ENCODE measurements at regions of chr4 and their contacts with region 1.

Region 1: GRCh38 chr4:26319467-26319948 is 1.3 kb upstream of the RBPJ start:
- DNase-seq: peak; percentile 88 to 96 (median 94)
- ATAC-seq: peak; percentile 77
- H3K4me3 ChIP-seq: peak overlapping the region; percentile 89
- H3K4me3 Mint-ChIP-seq: peak overlapping the region; percentile 89 to 100 (median 96)
- H3K27ac ChIP-seq: peak overlapping the region; percentile 84
- H3K27ac Mint-ChIP-seq: peak overlapping the region; percentile 92 to 100 (median 96)
- H3K4me1 ChIP-seq: peaks cover 10 to 14% of the 10 kb centered on the region in 2 donors
- H3K4me1 Mint-ChIP-seq: peaks cover 34 to 43% (median 36%) of the 10 kb centered on the region in 7 donors
- H3K27me3 ChIP-seq: no peaks in the 10 kb centered on the region
- H3K27me3 Mint-ChIP-seq: no peaks in the 10 kb centered on the region

Region 2: DNA sequence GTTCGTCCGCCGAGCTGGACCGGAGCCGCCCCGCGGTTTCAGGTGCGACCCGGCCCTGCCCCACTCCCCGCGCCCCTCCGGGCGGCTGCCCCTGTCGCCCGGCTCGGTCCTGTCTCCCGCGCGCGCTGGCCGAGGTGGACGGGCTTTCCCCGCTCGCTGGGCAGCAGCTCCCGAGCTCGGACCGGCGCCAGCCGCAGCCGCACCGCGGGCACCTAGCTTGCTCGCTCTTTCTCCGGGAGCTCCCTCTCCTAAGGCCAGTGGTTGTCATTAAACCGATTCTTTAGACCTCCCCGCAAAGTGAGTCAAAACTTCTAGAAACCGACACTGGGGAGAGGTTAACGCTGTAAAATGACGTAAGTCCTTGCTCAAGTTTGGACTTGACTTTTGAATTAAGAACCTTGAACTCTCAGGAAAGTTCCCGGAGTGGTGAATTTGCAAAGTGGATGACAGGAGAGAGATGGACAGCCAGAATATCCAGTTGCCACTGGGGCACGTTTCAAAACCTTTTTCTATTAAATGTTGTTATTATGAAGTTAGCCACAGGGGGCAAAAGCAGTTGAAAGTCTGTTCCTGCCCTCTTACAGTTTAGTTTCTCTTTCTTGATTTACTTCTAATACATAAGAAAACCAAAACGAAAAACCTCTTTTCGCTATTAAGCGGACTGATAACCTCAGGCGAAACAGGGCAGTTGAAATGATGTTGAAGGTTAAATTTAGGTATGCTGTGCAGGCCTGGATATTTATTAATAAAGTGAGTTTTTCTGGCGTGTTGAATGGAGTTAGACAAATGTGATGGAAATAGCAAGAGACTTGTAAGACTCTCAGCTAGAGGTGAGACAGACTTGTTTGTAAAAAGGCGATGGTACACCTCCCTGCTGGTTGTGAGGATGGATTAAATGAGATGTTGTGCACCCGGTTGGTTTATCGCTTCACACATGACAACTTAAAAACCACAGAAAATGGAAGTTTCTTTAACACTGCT is 1084.8 kb before region 1 on chr4:
- CTCF ChIA-PET with region 1: no interaction called
- POLR2A ChIA-PET with region 1: no interaction called
- intact Hi-C with region 1: loop called in 1 of 2 experiments (anchors 5 kb)
- DNase-seq: peak; percentile 20 to 76 (median 64)
- ATAC-seq: peak; percentile 70
- H3K4me3 ChIP-seq: peak overlapping the region; percentile 80
- H3K4me3 Mint-ChIP-seq: peak overlapping the region; percentile 86 to 99 (median 94)
- H3K27ac ChIP-seq: peak overlapping the region; percentile 89
- H3K27ac Mint-ChIP-seq: peak overlapping the region; percentile 89 to 98 (median 95)
- H3K4me1 ChIP-seq: peaks cover 16 to 29% of the 10 kb centered on the region in 2 donors
- H3K4me1 Mint-ChIP-seq: peaks cover 16 to 57% (median 44%) of the 10 kb centered on the region in 7 donors
- H3K27me3 ChIP-seq: no peaks in the 10 kb centered on the region
- H3K27me3 Mint-ChIP-seq: no peaks in the 10 kb centered on the region

Region 3: DNA sequence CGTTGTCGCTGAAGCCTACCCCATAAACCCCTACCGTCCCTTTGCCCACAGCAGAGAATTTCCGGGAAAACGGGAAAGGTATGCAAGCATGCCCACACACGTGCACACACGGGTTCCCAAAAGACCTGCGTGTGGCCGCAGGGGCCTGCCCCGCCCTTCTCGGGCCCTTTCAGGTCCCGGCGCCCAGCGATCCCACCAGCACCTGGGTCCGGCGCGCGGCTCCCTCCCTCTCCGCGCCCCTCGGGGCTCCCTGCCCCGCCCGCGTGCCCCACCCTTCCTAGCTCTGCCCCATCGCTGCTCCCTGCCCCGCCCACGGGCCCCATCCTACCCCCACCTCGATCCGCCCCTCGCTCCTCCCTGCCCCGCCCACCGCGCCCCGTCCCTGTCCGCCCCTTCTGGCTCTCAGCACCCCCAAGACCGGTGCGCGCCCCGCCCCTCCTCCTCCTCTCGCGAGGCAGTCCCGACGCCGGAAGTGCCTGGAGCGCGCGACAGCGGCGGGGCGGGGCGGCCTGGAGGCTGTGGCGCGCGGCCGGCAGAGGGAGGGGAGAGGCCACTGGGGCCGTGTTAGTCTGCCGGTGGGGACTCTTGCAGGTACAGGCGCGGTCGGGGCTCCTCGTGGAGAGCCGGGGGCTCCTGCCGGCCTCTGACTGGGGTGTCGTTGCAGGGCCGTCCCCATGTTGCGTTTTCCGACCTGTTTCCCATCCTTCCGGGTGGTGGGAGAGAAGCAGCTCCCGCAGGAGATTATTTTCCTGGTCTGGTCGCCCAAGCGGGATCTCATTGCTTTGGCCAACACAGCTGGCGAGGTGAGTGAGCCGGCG is 942.5 kb before region 1 on chr4 and contains the start of gene ANAPC4:
- CTCF ChIA-PET with region 1: no interaction called
- POLR2A ChIA-PET with region 1: interaction called, 3 read pairs
- intact Hi-C with region 1: loop called in 1 of 2 experiments (anchors 2 kb)
- DNase-seq: peak; percentile 85 to 97 (median 92)
- ATAC-seq: peak; percentile 97
- H3K4me3 ChIP-seq: peak within 1 kb of the TSS; percentile 96
- H3K4me3 Mint-ChIP-seq: peak within 1 kb of the TSS in 2 of 10 donors; percentile 78 to 83
- H3K27ac ChIP-seq: peak within 1 kb of the TSS; percentile 76
- H3K27ac Mint-ChIP-seq: peak within 1 kb of the TSS in 7 of 9 donors; percentile 64 to 93 (median 83)
- H3K4me1 ChIP-seq: peaks cover 11 to 17% of the 10 kb centered on the region in 2 donors
- H3K4me1 Mint-ChIP-seq: peaks cover 0 to 18% (median 13%) of the 10 kb centered on the region in 7 donors
- H3K27me3 ChIP-seq: no peaks in the 10 kb centered on the region
- H3K27me3 Mint-ChIP-seq: no peaks in the 10 kb centered on the region
- total RNA-seq, gene ANAPC4: 40.6 to 55.3 (median 50.4) TPM

Region 4: GRCh38 chr4:25993395-25994185 is 325.9 kb before region 1 on chr4:
- CTCF ChIA-PET with region 1: no interaction called
- POLR2A ChIA-PET with region 1: no interaction called
- intact Hi-C with region 1: loop called in 1 of 2 experiments (anchors 1 kb)
- DNase-seq: peak in 1 of 9 donors; percentile 8
- ATAC-seq: peak; percentile 41
- H3K4me3 ChIP-seq: no peak overlapping the region
- H3K4me3 Mint-ChIP-seq: no peak overlapping the region
- H3K27ac ChIP-seq: no peak overlapping the region
- H3K27ac Mint-ChIP-seq: peak overlapping the region in 2 of 9 donors; percentile 48 to 62
- H3K4me1 ChIP-seq: no peaks in the 10 kb centered on the region
- H3K4me1 Mint-ChIP-seq: peaks cover 0 to 11% (median 0%) of the 10 kb centered on the region in 7 donors
- H3K27me3 ChIP-seq: no peaks in the 10 kb centered on the region
- H3K27me3 Mint-ChIP-seq: no peaks in the 10 kb centered on the region

Region 5: DNA sequence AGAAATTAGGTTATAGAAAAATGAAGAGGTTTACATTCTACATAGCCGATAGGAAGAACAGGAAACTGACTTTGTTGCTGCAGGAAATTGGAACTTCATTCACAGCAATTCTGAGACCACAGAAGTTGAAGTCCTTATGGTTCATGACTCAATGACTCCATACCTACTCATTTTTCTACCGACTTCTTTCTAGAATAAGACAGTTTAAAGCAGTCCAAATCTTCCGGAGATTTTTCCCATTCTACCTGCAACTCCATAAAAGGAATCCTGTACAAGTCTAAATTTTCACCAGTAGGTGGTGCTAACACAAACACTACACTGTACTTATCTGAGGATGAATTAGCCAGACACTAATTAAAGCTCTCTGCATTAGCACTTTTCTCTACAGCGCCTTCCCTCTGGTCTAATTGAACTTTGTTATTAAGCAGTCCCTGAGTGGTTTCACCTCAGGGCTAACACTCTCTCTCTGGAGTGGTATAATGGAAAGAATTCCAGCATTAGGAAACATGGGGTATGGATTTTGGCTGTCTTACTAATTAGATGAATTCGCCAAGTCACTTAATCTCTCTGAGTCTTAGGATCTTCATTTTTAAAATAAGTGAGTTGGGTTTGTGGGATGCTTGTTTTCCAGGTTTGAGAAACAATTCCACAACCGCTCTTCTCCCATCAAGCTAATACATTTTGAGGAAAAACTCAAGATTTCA is 237.6 kb before region 1 on chr4:
- CTCF ChIA-PET with region 1: interaction called, 6 read pairs
- POLR2A ChIA-PET with region 1: interaction called, 4 read pairs
- intact Hi-C with region 1: loop called (anchors 1 kb)
- DNase-seq: peak in 5 of 9 donors; percentile 16 to 29 (median 22)
- ATAC-seq: peak; percentile 66
- H3K4me3 ChIP-seq: no peak overlapping the region
- H3K4me3 Mint-ChIP-seq: peak overlapping the region in 1 of 10 donors; percentile 49
- H3K27ac ChIP-seq: no peak overlapping the region
- H3K27ac Mint-ChIP-seq: peak overlapping the region in 1 of 9 donors; percentile 73
- H3K4me1 ChIP-seq: no peaks in the 10 kb centered on the region
- H3K4me1 Mint-ChIP-seq: peaks cover 0 to 65% (median 6%) of the 10 kb centered on the region in 7 donors
- H3K27me3 ChIP-seq: no peaks in the 10 kb centered on the region
- H3K27me3 Mint-ChIP-seq: peaks cover 0 to 38% (median 7%) of the 10 kb centered on the region in 5 donors

Region 6: DNA sequence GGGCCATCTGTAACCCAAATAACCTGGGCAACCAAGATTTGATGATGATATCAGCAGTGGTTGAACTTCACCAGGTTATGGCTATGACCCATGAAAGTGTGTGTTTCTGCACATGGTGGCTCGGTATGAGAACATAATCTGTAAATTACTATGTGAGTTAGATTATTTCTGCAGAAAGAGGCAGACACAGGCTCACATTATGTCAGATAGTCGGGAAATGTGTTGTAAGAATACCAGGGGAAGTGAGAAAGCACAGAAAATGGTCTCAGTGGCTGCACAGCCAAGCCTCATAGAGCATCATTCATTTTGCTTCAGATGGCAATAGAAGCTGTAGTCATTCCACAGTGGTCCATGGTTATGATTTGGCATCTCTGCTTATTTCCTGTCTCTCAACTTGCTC is 61.7 kb before region 1 on chr4:
- CTCF ChIA-PET with region 1: no interaction called
- POLR2A ChIA-PET with region 1: no interaction called
- intact Hi-C with region 1: loop called in 1 of 2 experiments (anchors 5 kb)
- DNase-seq: no peak
- ATAC-seq: peak; percentile 50
- H3K4me3 ChIP-seq: no peak overlapping the region
- H3K4me3 Mint-ChIP-seq: no peak overlapping the region
- H3K27ac ChIP-seq: no peak overlapping the region
- H3K27ac Mint-ChIP-seq: no peak overlapping the region
- H3K4me1 ChIP-seq: no peaks in the 10 kb centered on the region
- H3K4me1 Mint-ChIP-seq: peaks cover 0 to 2% (median 0%) of the 10 kb centered on the region in 7 donors
- H3K27me3 ChIP-seq: no peaks in the 10 kb centered on the region
- H3K27me3 Mint-ChIP-seq: peaks cover 0 to 11% (median 0%) of the 10 kb centered on the region in 5 donors

Region 7: DNA sequence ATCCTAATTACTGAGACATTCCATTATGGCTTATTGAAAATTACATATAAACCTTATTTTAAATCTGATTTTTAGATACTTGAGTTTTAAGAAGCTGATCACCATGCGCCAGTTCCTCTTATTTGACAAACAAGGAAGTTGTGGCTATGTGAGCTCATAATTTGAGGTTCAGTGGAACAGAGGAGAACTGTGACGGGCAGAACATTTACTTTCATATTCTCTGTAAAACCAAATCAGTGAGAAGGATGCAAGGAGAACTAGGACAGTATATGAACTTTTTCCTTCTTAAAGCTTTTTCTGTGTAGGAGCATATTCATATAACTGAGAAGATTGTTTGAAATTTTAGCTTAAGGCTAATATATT is 566.4 kb after region 1 on chr4:
- CTCF ChIA-PET with region 1: no interaction called
- POLR2A ChIA-PET with region 1: interaction called, 3 read pairs
- intact Hi-C with region 1: loop called in 1 of 2 experiments (anchors 1 kb)
- DNase-seq: peak in 7 of 9 donors; percentile 60 to 81 (median 77)
- ATAC-seq: peak; percentile 76
- H3K4me3 ChIP-seq: peak overlapping the region; percentile 45
- H3K4me3 Mint-ChIP-seq: peak overlapping the region; percentile 70 to 91 (median 82)
- H3K27ac ChIP-seq: peak overlapping the region; percentile 73
- H3K27ac Mint-ChIP-seq: peak overlapping the region; percentile 93 to 98 (median 95)
- H3K4me1 ChIP-seq: peaks cover 32 to 39% of the 10 kb centered on the region in 2 donors
- H3K4me1 Mint-ChIP-seq: peaks cover 33 to 95% (median 84%) of the 10 kb centered on the region in 7 donors
- H3K27me3 ChIP-seq: no peaks in the 10 kb centered on the region
- H3K27me3 Mint-ChIP-seq: no peaks in the 10 kb centered on the region

Region 8: GRCh38 chr4:26985873-26986272 is 666.4 kb after region 1 on chr4:
- CTCF ChIA-PET with region 1: no interaction called
- POLR2A ChIA-PET with region 1: no interaction called
- intact Hi-C with region 1: no loop called
- DNase-seq: peak in 8 of 9 donors; percentile 33 to 71 (median 59)
- ATAC-seq: peak; percentile 95
- H3K4me3 ChIP-seq: peak overlapping the region; percentile 11
- H3K4me3 Mint-ChIP-seq: peak overlapping the region in 9 of 10 donors; percentile 19 to 72 (median 63)
- H3K27ac ChIP-seq: no peak overlapping the region
- H3K27ac Mint-ChIP-seq: peak overlapping the region in 6 of 9 donors; percentile 2 to 39 (median 10)
- H3K4me1 ChIP-seq: peaks cover 8 to 22% of the 10 kb centered on the region in 2 donors
- H3K4me1 Mint-ChIP-seq: peaks cover 19 to 78% (median 72%) of the 10 kb centered on the region in 7 donors
- H3K27me3 ChIP-seq: no peaks in the 10 kb centered on the region
- H3K27me3 Mint-ChIP-seq: no peaks in the 10 kb centered on the region